ENCODE measurements at regions of chr13 and their contacts with region 1.

Region 1: GRCh38 chr13:77480066-77480465 is 55.4 kb upstream of the SCEL start:
- DNase-seq: no peak
- H3K4me3 ChIP-seq: no peak overlapping the region
- H3K4me3 Mint-ChIP-seq: no peak overlapping the region
- H3K27ac ChIP-seq: no peak overlapping the region
- H3K27ac Mint-ChIP-seq: no peak overlapping the region
- H3K4me1 ChIP-seq: peaks cover 8% of the 10 kb centered on the region
- H3K4me1 Mint-ChIP-seq: peaks cover 8 to 11% (median 10%) of the 10 kb centered on the region in 4 donors
- H3K27me3 ChIP-seq: no peaks in the 10 kb centered on the region
- H3K27me3 Mint-ChIP-seq: no peaks in the 10 kb centered on the region

Region 2: GRCh38 chr13:77079902-77080413 is 400.1 kb before region 1 on chr13:
- CTCF ChIA-PET with region 1: no interaction called
- POLR2A ChIA-PET with region 1: no interaction called
- intact Hi-C with region 1: loop called (anchors 10 kb)
- DNase-seq: no peak
- H3K4me3 ChIP-seq: no peak overlapping the region
- H3K4me3 Mint-ChIP-seq: no peak overlapping the region
- H3K27ac ChIP-seq: no peak overlapping the region
- H3K27ac Mint-ChIP-seq: peak overlapping the region in 3 of 7 donors; percentile 6 to 47 (median 32)
- H3K4me1 ChIP-seq: no peaks in the 10 kb centered on the region
- H3K4me1 Mint-ChIP-seq: peaks cover 0 to 4% (median 4%) of the 10 kb centered on the region in 4 donors
- H3K27me3 ChIP-seq: no peaks in the 10 kb centered on the region
- H3K27me3 Mint-ChIP-seq: no peaks in the 10 kb centered on the region

Region 3: DNA sequence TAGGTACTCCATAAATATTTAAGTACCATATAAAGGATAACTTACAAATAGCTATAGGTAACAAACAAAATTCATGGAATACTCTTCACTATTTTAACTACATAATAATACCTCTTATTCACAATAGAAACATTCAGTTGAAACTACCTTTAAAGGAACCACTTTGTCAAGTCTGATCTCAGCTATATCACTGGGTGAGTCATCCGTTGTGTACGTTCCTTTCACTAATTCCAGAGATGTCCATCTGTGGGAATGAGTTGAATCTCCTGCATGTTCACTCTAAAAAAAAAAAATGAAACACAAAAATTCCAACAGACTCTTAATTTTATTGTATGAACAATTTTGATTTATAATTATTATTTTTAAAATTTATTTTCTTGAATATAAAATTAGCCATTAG is 303.7 kb before region 1 on chr13:
- CTCF ChIA-PET with region 1: interaction called, 12 read pairs
- POLR2A ChIA-PET with region 1: no interaction called
- intact Hi-C with region 1: no loop called
- DNase-seq: no peak
- H3K4me3 ChIP-seq: no peak overlapping the region
- H3K4me3 Mint-ChIP-seq: no peak overlapping the region
- H3K27ac ChIP-seq: no peak overlapping the region
- H3K27ac Mint-ChIP-seq: no peak overlapping the region
- H3K4me1 ChIP-seq: no peaks in the 10 kb centered on the region
- H3K4me1 Mint-ChIP-seq: peaks cover 3 to 9% (median 6%) of the 10 kb centered on the region in 4 donors
- H3K27me3 ChIP-seq: no peaks in the 10 kb centered on the region
- H3K27me3 Mint-ChIP-seq: no peaks in the 10 kb centered on the region

Region 4: GRCh38 chr13:77207943-77208342 is 272.1 kb before region 1 on chr13:
- CTCF ChIA-PET with region 1: interaction called, 3 read pairs
- POLR2A ChIA-PET with region 1: no interaction called
- intact Hi-C with region 1: loop called (anchors 5 kb)
- DNase-seq: no peak
- H3K4me3 ChIP-seq: no peak overlapping the region
- H3K4me3 Mint-ChIP-seq: no peak overlapping the region
- H3K27ac ChIP-seq: no peak overlapping the region
- H3K27ac Mint-ChIP-seq: peak overlapping the region in 4 of 7 donors; percentile 28 to 52 (median 40)
- H3K4me1 ChIP-seq: peaks cover 13% of the 10 kb centered on the region
- H3K4me1 Mint-ChIP-seq: peaks cover 11 to 19% (median 13%) of the 10 kb centered on the region in 4 donors
- H3K27me3 ChIP-seq: no peaks in the 10 kb centered on the region
- H3K27me3 Mint-ChIP-seq: no peaks in the 10 kb centered on the region

Region 5: GRCh38 chr13:77274126-77274525 is 205.9 kb before region 1 on chr13:
- CTCF ChIA-PET with region 1: interaction called, 32 read pairs
- POLR2A ChIA-PET with region 1: interaction called, 3 read pairs
- intact Hi-C with region 1: loop called (anchors 1 kb)
- DNase-seq: no peak
- H3K4me3 ChIP-seq: no peak overlapping the region
- H3K4me3 Mint-ChIP-seq: no peak overlapping the region
- H3K27ac ChIP-seq: no peak overlapping the region
- H3K27ac Mint-ChIP-seq: peak overlapping the region in 1 of 7 donors; percentile 4
- H3K4me1 ChIP-seq: no peaks in the 10 kb centered on the region
- H3K4me1 Mint-ChIP-seq: peaks cover 0 to 23% (median 8%) of the 10 kb centered on the region in 4 donors
- H3K27me3 ChIP-seq: no peaks in the 10 kb centered on the region
- H3K27me3 Mint-ChIP-seq: no peaks in the 10 kb centered on the region

Region 6: GRCh38 chr13:77492982-77493381 is 12.9 kb after region 1 on chr13:
- CTCF ChIA-PET with region 1: interaction called, 18 read pairs
- POLR2A ChIA-PET with region 1: interaction called, 3 read pairs
- intact Hi-C with region 1: no loop called
- DNase-seq: peak in 2 of 5 donors; percentile 5 to 7
- H3K4me3 ChIP-seq: no peak overlapping the region
- H3K4me3 Mint-ChIP-seq: no peak overlapping the region
- H3K27ac ChIP-seq: no peak overlapping the region
- H3K27ac Mint-ChIP-seq: no peak overlapping the region
- H3K4me1 ChIP-seq: no peaks in the 10 kb centered on the region
- H3K4me1 Mint-ChIP-seq: no peaks in the 10 kb centered on the region
- H3K27me3 ChIP-seq: no peaks in the 10 kb centered on the region
- H3K27me3 Mint-ChIP-seq: peaks cover 0 to 6% of the 10 kb centered on the region in 2 donors

Region 7: GRCh38 chr13:77751513-77752456 is 271.7 kb after region 1 on chr13:
- CTCF ChIA-PET with region 1: interaction called, 11 read pairs
- POLR2A ChIA-PET with region 1: no interaction called
- intact Hi-C with region 1: loop called (anchors 1 kb)
- DNase-seq: peak; percentile 52 to 61 (median 58)
- H3K4me3 ChIP-seq: no peak overlapping the region
- H3K4me3 Mint-ChIP-seq: no peak overlapping the region
- H3K27ac ChIP-seq: no peak overlapping the region
- H3K27ac Mint-ChIP-seq: peak overlapping the region in 2 of 7 donors; percentile 12 to 43
- H3K4me1 ChIP-seq: peaks cover 5% of the 10 kb centered on the region
- H3K4me1 Mint-ChIP-seq: peaks cover 12 to 17% (median 14%) of the 10 kb centered on the region in 4 donors
- H3K27me3 ChIP-seq: no peaks in the 10 kb centered on the region
- H3K27me3 Mint-ChIP-seq: no peaks in the 10 kb centered on the region

Measured in CD4-positive, alpha-beta memory T cell (primary cell).